Prostate gland (tissue), 2 donors: ENCODE measurements at regions of chr19 and their contacts with region 1.

Region 1: GRCh38 chr19:45643024-45643926 is 4.1 kb upstream of the EML2 start:
- DNase-seq: peak; percentile 82
- H3K4me3 ChIP-seq: no peak overlapping the region
- H3K27ac ChIP-seq: no peak overlapping the region
- H3K4me1 ChIP-seq: peaks cover 6% of the 10 kb centered on the region
- H3K27me3 ChIP-seq: no peaks in the 10 kb centered on the region
- CTCF ChIP-seq: peak; percentile 88 to 99 (median 98)
- POLR2A ChIP-seq: no peak

Region 2: DNA sequence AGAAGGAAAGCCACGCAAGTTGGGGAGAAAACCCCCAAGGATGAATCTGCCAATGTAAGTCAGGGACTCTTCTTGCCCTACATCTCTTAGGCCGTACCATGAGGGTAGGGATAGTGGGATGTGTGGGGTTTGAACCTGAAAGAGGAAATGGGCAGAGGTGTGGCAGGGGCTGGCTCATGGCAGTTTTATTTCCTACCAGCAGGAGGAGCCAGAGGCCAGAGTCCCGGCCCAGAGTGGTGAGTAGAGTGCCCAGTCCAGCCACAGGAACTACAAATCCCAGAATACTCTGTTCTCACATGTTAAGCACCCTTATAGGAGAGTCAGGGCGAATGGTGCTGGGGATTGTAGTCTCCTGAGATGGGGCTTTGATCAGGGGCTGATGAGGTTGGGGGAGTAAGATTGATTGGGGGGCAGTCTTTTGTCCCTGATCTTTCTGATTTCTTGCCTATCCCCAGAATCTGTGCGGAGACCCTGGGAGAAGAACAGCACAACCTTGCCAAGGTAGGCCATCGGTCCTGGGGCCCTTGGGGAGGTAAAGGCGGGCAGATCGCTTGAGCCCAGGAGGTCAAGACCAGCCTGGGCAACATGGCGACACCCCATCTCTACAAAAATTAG is 119.5 kb before region 1 on chr19:
- intact Hi-C with region 1: loop called (anchors 2 kb)
- DNase-seq: peak; percentile 84
- H3K4me3 ChIP-seq: no peak overlapping the region
- H3K27ac ChIP-seq: peak overlapping the region in 1 of 2 donors; percentile 29
- H3K4me1 ChIP-seq: no peaks in the 10 kb centered on the region
- H3K27me3 ChIP-seq: no peaks in the 10 kb centered on the region
- CTCF ChIP-seq: peak; percentile 81 to 98 (median 96)
- POLR2A ChIP-seq: no peak

Region 3: DNA sequence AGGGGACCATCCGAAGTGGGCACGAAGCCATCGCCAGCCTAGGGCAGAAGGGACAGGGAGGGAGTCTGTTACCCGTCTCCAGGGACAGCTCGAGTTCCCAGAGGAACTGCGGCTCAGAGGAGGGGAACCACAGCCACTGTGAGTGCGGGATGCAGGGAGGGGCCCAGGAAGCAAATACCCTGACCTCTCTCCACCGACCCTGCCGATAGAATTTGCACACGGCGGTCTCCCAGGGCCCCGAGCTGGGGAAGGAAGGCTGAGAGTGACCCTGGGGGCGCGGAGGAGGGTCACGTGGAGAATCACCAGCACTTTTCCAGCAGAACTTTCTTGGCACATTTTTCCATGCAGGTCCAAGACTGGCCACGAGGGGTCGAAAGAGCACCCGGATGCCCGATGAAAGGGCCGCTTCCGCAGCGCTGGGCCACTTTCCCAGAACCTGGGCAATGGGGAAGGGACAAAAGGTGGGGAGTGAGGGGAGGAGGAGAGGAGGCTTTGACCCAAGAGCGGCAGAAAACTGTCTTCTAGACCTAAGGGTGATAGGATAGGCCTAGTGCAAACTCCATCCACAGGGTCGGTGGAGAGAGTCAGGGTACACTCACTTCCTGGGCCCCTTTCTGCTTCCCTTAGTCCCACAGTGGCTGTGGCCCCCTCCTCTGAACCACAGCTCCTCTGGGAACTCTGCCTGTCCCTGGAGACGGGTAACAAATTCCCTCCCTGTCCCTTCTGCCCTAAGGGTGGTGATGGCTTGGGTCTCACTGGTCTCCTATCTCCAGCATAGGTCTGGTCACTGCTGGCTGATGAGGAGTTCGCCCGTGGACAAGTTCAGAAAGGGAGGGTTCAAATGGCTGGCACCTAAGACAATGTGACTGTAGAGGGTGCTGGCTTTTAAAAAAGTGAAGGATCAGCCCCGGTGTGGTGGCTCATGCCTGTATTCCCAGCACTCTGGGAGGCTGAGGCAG is 35.9 kb before region 1 on chr19:
- intact Hi-C with region 1: loop called (anchors 2 kb)
- DNase-seq: peak; percentile 57
- H3K4me3 ChIP-seq: no peak overlapping the region
- H3K27ac ChIP-seq: peak overlapping the region; percentile 26 to 31
- H3K4me1 ChIP-seq: no peaks in the 10 kb centered on the region
- H3K27me3 ChIP-seq: no peaks in the 10 kb centered on the region
- CTCF ChIP-seq: peak; percentile 79 to 96 (median 92)
- POLR2A ChIP-seq: no peak

Region 4: DNA sequence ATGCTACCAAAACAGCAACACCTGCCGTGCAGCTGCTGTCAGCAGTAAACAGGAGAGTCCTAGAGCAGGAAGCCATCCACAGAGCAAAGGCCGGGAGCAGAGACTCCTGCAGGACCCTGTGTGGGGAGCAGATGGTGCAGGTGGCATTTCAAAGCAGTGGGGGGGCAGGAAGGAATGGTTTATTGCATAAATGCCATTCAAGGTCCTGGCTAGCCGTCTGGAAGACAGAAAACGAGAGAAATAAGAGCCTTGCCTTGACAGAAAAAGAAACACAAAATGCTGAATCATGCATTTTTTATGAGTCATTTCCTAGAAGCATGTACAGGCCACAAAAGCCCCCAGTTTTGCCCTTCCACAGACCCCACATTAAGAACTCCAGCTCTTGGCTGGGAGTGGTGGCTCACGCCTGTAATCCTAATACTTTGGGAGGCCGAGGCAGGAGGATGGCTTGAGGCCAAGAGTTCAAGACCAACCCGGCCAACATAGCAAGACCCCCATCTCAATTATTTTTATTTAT is 166.4 kb after region 1 on chr19:
- intact Hi-C with region 1: no loop called
- DNase-seq: no peak
- H3K4me3 ChIP-seq: no peak overlapping the region
- H3K27ac ChIP-seq: no peak overlapping the region
- H3K4me1 ChIP-seq: no peaks in the 10 kb centered on the region
- H3K27me3 ChIP-seq: no peaks in the 10 kb centered on the region
- CTCF ChIP-seq: no peak
- POLR2A ChIP-seq: no peak